ENCODE measurements at regions of chr7 and their contacts with region 1.

Region 1: DNA sequence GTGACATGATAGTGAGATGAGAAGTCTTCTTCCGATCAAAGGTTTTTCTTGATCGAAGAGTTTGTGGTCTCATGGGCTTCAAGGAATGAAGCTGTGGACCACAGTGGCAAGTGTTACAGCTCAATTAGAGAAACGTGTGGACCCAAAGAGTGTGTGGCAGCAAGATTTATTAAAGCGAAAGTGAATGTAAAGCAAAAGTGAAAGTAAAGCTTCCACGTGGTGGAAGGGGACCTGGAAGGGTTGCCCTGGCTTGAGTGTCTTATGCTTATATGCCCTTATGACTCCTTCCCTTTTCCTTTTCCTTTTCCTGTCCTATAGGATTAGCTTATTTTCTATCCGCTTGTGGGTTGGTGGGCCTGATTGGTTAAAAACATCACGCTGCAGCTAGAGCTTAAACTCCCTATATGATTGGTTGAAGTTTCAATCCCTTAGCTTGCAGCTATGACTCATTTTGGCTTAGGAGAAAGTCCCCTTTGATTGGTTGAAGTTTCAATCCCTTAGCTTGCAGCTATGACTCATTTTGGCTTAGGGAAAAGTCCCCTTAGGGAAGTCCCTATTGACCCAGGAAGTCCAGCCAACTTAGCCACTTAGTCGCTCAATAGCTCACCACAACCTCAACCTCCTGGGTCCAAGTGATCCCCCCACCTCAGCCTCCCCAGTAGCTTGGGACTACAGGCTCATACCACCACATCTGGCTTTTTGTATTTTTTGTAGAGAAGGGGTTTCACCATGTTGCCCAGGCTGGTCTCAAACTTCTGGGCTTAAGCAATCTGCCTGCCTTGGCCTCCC is 34.7 kb downstream of the MRPS24 start:
- DNase-seq: no peak
- H3K4me3 ChIP-seq: no peak overlapping the region
- H3K4me1 ChIP-seq: peaks cover 4% of the 10 kb centered on the region; the same call in 1 of the 2 replicates
- H3K27me3 ChIP-seq: no peaks in the 10 kb centered on the region

Region 2: GRCh38 chr7:43454936-43455518 is 379.6 kb before region 1 on chr7:
- in situ Hi-C with region 1: loop called (anchors 25 kb)
- DNase-seq: peak; percentile 21 to 44
- H3K4me3 ChIP-seq: no peak overlapping the region
- H3K4me1 ChIP-seq: no peaks in the 10 kb centered on the region
- H3K27me3 ChIP-seq: no peaks in the 10 kb centered on the region; the same call in 1 of the 2 replicates

Region 3: GRCh38 chr7:43582503-43583423 is 251.9 kb before region 1 on chr7 and contains the start of gene STK17A:
- in situ Hi-C with region 1: loop called (anchors 25 kb)
- DNase-seq: peak; percentile 82 to 91
- H3K4me3 ChIP-seq: peak within 1 kb of the TSS; percentile 69
- H3K4me1 ChIP-seq: peaks cover 5% of the 10 kb centered on the region; the same call in 1 of the 2 replicates
- H3K27me3 ChIP-seq: peaks cover 22% of the 10 kb centered on the region

Region 4: GRCh38 chr7:43729214-43729923 is 105.3 kb before region 1 on chr7 and contains the start of gene COA1:
- in situ Hi-C with region 1: loop called (anchors 10 kb)
- DNase-seq: peak; percentile 86 to 87
- H3K4me3 ChIP-seq: peak within 1 kb of the TSS; percentile 88
- H3K4me1 ChIP-seq: peaks cover 11% of the 10 kb centered on the region
- H3K27me3 ChIP-seq: no peaks in the 10 kb centered on the region